HEK293T (cell line): ENCODE measurements at regions of chr14 and their contacts with region 1.

Region 1: DNA sequence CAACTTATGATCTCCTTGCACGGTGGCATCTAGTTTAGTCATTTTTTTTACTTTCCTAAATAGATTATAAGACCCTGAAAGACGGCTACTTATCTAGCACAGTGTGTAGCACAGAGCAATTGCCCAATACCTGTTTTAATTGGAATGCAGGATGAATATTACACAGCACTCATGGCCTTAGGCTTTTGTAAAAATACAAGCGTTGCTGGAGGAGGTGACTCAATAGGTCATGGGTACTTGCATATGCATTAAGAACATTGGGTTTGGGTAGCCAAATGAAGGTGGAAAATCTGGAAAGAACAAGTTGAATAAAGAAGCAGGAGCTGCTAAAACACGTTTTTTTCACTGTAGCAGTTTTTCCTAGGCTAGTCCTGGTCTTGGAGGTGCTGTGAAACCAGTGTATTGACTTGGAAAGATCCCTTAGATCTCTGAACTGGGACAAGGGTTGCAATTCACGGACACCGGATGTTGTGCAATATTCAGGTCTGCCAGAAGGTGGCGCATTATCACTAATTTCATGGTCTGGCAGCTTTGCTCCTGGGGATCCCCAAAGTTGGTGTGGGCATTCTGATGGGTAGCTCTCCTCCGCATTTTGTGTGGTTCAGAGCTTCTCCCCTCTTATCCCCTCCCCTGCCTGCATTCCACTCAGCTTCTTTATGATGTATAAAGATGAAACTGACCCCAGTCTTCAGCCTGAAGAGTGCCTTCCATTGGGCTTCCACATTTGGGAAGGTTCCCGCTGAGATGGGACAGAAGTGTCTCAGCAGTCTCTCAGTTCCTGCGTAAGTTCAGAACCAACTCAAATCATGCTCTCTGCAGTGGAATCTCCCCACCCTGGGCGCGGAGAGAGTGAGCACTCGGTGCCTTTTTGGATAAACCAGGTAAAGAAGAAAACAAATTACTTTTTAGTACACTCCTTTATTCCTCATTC is 278.3 kb downstream of the NRXN3 start:
- DNase-seq: peak; percentile 65

Region 2: DNA sequence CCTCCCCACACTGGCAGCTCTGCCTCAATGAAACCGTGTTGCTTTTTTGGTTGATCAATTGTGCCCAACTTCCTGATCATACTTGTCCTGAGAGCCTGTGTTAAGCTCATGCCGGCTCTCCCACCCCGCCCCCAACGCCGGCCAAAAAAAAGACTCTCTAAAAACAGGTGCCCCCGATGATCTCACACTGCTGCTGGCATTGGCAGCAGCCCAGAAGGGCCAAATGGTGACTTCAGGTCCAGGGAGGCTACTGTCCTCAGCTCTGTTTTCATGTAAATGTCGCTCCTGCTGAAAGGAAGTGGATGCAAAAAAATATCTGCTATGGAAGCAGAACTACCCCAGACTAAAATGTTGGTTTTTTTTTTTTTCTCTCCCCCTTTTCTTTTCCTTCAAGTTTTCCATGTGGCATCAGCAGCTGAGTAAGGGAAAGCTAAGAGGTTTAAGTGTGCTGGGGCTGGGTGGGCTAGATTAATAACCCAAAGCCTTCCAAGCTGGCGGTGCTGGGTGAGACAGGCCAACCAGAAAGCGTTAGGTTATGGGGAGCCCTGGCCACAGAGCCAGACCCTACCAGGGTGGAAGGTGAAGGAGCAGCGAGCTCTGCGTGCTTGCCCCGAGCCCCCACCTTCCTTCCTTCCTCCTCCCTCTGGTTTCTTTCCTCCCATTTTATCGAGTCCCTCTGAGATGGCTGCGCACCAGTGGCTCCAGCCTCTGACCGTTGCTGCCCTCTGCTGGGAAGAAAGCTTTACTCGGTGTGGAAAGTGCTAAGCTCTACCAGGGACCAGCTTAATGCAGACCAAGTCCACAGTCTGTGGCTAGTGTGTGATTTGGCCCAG is 117.8 kb after region 1 on chr14:
- CTCF ChIA-PET with region 1: interaction called, 19 read pairs
- POLR2A ChIA-PET with region 1: no interaction called
- DNase-seq: peak; percentile 70